ENCODE measurements at regions of chr14 and their contacts with region 1.

Region 1: GRCh38 chr14:99724196-99724891 is 40.2 kb downstream of the CYP46A1 start:
- DNase-seq: no peak
- ATAC-seq: no peak
- H3K4me3 ChIP-seq: no peak overlapping the region
- H3K27ac ChIP-seq: no peak overlapping the region
- H3K4me1 ChIP-seq: no peaks in the 10 kb centered on the region
- H3K27me3 ChIP-seq: no peaks in the 10 kb centered on the region
- CTCF ChIP-seq: no peak
- POLR2A ChIP-seq: no peak

Region 2: DNA sequence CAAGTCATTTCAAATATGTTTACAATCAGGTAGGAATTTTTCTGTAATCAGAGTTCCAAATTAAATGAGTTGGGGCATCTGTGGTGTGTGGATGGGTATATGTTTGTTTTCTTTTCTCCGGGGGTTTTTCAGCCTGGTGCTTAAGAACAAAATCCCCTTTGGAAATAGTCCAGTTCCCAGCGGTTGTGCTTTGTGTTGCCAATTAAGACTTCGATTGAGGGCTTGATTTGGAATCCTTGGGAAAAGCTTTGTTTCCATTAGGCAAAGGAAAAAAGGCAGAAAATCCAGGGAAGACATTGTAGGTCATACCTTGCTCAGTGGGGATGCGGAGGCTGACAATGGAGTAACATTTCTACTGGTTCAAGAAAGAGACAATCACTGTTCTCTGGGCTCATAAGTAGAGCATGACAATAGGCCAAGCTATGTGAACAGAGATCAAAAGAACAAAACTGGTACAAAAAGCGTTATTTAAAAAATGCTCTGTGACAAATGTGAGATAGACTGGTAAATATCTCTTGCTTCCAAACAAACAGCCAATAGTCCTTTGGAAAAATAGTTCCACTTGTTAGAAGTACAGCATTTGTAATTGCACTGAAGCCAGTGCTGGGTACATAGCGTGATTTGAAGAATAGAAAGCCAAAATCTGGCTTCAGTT is 148.6 kb after region 1 on chr14:
- in situ Hi-C with region 1: loop called in 1 of 4 experiments (anchors 5 kb)
- intact Hi-C with region 1: no loop called
- DNase-seq: no peak
- ATAC-seq: no peak
- H3K4me3 ChIP-seq: no peak overlapping the region
- H3K27ac ChIP-seq: no peak overlapping the region
- H3K4me1 ChIP-seq: peaks cover 9 to 12% of the 10 kb centered on the region in 2 donors
- H3K27me3 ChIP-seq: no peaks in the 10 kb centered on the region
- CTCF ChIP-seq: no peak
- POLR2A ChIP-seq: no peak